Endothelial cell of umbilical vein (primary cell): ENCODE measurements at regions of chr17 and their contacts with region 1.

Region 1: DNA sequence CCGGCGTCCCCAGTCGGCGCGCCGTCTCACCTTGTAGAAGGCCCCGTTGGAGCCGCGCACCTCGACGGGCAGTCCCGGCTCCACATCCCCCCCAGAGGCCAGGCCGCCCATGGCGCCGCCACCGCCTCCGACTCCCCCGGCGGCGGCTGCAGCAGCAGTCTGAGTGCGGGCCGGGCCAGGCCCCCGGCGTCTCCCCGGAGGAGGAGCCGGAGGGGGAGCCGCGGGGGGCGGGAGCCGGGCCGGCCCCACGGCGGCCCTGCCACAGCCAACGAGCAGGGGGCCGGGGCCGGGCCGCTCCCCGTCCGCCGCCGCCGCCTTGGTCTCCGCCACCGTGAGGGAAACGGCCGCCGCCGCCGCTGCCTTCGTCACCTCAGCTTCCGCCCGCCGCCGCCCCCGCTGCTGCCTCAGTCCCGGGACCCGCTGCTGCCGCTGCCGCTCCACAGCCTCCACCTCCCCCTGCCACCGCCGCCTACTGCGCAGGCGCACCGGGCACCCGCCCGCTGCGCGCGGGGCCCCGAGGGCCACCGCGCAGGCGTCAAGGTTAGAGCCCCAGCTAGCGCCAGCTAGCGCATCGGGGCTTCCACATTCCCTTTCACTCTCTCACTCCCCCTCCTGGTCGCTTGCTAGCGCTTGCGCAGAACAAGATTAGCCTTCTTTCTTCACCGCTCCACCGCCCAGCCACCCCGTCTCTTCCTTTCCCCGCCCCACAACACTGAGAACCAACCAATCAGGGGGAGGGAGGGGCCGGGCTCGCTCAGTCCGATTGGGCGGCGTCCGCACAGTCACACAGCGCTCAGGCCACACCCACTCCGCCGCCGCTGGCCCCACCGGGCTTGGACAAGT is at the start of gene FXR2:
- DNase-seq: peak; percentile 100
- H3K4me3 ChIP-seq: peak within 1 kb of the TSS; percentile 55 to 97 (median 73)
- H3K27ac ChIP-seq: peak within 1 kb of the TSS; percentile 56
- H3K4me1 ChIP-seq: peaks cover 24% of the 10 kb centered on the region
- H3K27me3 ChIP-seq: no peaks in the 10 kb centered on the region
- CTCF ChIP-seq: peak; percentile 68 to 79
- POLR2A ChIP-seq: peak; percentile 67
- total RNA-seq, gene FXR2: 33.1 and 40.1 TPM in 2 replicates

Region 2: DNA sequence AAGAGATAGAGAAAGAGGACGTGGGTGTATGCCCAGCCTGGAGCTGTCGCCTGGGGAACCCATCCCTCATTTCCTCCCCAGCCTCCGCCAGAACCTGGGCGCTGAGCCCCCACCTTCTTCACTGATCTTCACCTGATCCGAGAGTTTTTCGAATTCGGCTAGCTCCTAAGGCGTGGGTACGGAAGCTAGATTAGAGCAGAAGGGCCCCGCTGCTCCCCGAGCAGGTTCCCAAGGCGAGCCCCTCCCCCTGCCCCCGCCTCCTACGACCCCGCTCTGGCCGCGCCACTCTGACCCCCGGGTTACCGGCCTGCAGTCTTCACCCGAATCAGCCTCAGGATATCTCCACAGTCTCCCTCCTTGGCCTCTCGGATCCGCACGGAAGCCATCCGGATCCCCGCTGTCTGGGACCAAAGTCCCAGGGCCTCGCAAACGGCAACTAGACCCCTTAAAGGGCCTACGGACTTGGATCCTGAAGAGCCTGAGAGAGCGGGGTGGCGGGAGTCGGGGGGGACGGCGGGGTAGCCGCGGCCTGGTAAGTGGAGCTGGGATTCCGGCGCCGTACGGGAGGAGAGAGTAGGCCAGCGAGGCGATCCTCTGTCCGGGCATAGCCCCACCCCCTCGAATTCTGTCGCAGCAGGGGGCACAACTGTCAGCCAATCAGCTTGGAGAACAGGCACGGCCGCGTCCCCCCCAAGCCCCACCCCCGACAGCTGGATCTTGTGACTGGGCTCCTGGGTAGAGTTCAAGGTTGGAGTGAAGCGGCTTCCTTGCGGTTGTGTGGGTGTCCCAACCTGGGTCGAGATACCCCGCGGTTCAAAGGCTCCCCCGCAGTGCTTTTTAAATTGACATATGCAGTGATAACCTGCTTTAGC is 12.8 kb after region 1 on chr17 and contains the start of gene SAT2:
- CTCF ChIA-PET with region 1: interaction called, 11 read pairs
- POLR2A ChIA-PET with region 1: interaction called, 8 read pairs
- dilution Hi-C with region 1: no loop called
- intact Hi-C with region 1: loop called (anchors 1 kb)
- DNase-seq: peak; percentile 92
- H3K4me3 ChIP-seq: peak within 1 kb of the TSS; percentile 67 to 87 (median 81)
- H3K27ac ChIP-seq: peak within 1 kb of the TSS; percentile 66
- H3K4me1 ChIP-seq: no peaks in the 10 kb centered on the region
- H3K27me3 ChIP-seq: no peaks in the 10 kb centered on the region
- CTCF ChIP-seq: no peak
- POLR2A ChIP-seq: peak; percentile 90
- total RNA-seq, gene SAT2: 51.8 and 52.5 TPM in 2 replicates

Region 3: GRCh38 chr17:7844292-7845154 is 229.9 kb after region 1 on chr17:
- CTCF ChIA-PET with region 1: no interaction called
- POLR2A ChIA-PET with region 1: no interaction called
- dilution Hi-C with region 1: no loop called
- intact Hi-C with region 1: loop called (anchors 10 kb)
- DNase-seq: peak; percentile 92
- H3K4me3 ChIP-seq: peak overlapping the region; percentile 45 to 71 (median 60)
- H3K27ac ChIP-seq: peak overlapping the region; percentile 99
- H3K4me1 ChIP-seq: peaks cover 14% of the 10 kb centered on the region
- H3K27me3 ChIP-seq: no peaks in the 10 kb centered on the region
- CTCF ChIP-seq: no peak
- POLR2A ChIP-seq: peak; percentile 52